Aorta (tissue), 5 donors: ENCODE measurements at regions of chr13 and their contacts with region 1.

Region 1: GRCh38 chr13:92994056-92994455 is 232.6 kb upstream of the GPC6 start:
- DNase-seq: no peak
- ATAC-seq: no peak
- H3K4me3 ChIP-seq: no peak overlapping the region
- H3K27ac ChIP-seq: no peak overlapping the region
- H3K4me1 ChIP-seq: no peaks in the 10 kb centered on the region
- H3K27me3 ChIP-seq: no peaks in the 10 kb centered on the region

Region 2: GRCh38 chr13:92609376-92609775 is 384.7 kb before region 1 on chr13:
- intact Hi-C with region 1: no loop called
- DNase-seq: no peak
- ATAC-seq: no peak
- H3K4me3 ChIP-seq: no peak overlapping the region
- H3K27ac ChIP-seq: no peak overlapping the region
- H3K4me1 ChIP-seq: no peaks in the 10 kb centered on the region
- H3K27me3 ChIP-seq: no peaks in the 10 kb centered on the region

Region 3: DNA sequence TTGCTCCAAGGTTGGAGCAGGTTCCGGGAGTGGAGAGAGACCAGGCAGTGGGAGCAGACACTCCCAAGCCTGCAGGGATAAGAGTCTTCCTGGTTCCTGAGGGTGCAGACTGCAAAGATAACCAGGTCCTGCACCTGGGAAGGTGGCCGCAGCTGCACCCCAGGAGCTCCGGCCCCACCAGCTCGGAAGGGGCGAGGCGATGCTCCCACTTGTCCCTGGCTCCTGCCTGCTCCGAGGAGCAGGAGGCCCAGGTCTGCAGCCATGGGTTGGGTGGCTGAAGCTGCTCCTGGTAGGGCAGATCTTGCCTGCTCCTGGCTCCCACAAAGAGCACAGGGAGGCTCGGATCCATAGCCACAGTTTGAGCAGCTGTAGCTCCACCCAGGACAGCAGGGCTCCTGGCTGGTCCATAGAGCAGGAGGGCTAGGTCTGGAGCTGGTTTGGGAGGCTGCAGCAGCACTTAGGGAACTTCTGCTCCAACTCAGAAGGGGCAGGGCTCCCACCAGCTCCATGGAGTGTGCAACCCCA is 19.1 kb before region 1 on chr13:
- intact Hi-C with region 1: loop called in 1 of 2 experiments (anchors 2 kb)
- DNase-seq: no peak
- ATAC-seq: no peak
- H3K4me3 ChIP-seq: no peak overlapping the region
- H3K27ac ChIP-seq: no peak overlapping the region
- H3K4me1 ChIP-seq: no peaks in the 10 kb centered on the region
- H3K27me3 ChIP-seq: no peaks in the 10 kb centered on the region